Caco-2 (cell line): ENCODE measurements at regions of chr3 and their contacts with region 1.

Region 1: GRCh38 chr3:20511863-20512505 is 326.0 kb upstream of the SGO1 start:
- DNase-seq: peak; percentile 22 to 38
- H3K4me3 ChIP-seq: no peak overlapping the region
- H3K4me3 Mint-ChIP-seq: no peak overlapping the region
- H3K27ac Mint-ChIP-seq: no peak overlapping the region
- H3K4me1 ChIP-seq: no peaks in the 10 kb centered on the region
- H3K4me1 Mint-ChIP-seq: no peaks in the 10 kb centered on the region
- H3K27me3 ChIP-seq: no peaks in the 10 kb centered on the region
- H3K27me3 Mint-ChIP-seq: peaks cover 3% of the 10 kb centered on the region
- CTCF ChIP-seq: peak; percentile 45 to 65

Region 2: DNA sequence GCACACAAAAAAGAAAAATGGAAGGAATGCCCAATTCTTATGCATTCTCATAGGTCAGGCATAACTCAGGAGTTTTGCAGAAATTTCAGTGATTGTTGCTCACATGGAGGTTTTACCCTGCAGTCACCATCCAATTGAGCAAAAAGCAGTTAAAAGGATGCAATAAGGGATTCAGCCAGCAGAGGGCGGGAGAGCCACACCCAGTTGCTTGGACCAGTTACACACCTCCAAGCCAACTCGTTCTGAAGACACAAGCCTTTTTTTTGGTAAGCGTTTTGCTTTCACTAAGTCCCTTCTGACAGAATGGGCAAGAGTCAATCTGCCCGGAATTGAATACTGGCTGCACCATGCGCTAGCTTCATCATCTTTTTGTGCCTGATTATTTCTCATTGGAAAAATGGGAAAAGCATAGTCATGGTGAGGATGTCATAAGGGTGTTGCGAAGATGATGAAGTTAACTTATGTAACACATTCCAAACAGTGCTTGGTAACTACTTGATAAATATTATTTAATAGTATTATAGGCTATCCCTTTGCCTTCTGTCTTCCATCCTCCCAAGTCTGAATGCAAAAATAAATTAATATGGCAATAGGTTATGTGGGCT is 171.6 kb before region 1 on chr3:
- CTCF ChIA-PET with region 1: no interaction called
- POLR2A ChIA-PET with region 1: interaction called, 6 read pairs
- intact Hi-C with region 1: loop called (anchors 1 kb)
- DNase-seq: peak; percentile 63 to 79
- H3K4me3 ChIP-seq: no peak overlapping the region
- H3K4me3 Mint-ChIP-seq: no peak overlapping the region
- H3K27ac Mint-ChIP-seq: no peak overlapping the region
- H3K4me1 ChIP-seq: peaks cover 11% of the 10 kb centered on the region
- H3K4me1 Mint-ChIP-seq: no peaks in the 10 kb centered on the region
- H3K27me3 ChIP-seq: no peaks in the 10 kb centered on the region
- H3K27me3 Mint-ChIP-seq: no peaks in the 10 kb centered on the region
- CTCF ChIP-seq: peak; percentile 84 to 85

Region 3: DNA sequence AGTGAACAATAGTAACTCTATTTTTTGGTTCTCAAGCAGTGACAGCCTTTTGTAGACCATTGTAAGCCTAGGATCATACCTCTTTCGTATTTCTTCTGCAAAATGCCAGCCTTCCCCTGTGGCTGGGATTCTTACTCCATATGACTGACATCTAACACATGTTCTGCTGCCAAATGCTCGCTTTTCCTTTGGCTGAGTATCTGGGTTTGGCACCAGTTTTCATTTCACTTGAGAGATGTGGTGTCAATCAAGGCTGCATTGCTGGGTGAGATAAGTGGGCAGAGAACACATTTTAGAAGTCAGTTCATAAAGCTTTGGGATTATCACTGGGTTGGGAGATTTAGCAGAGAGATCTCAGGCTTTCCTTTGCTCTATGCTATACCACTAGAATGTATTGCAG is 188.7 kb after region 1 on chr3:
- CTCF ChIA-PET with region 1: no interaction called
- POLR2A ChIA-PET with region 1: no interaction called
- intact Hi-C with region 1: no loop called
- DNase-seq: no peak
- H3K4me3 ChIP-seq: no peak overlapping the region
- H3K4me3 Mint-ChIP-seq: no peak overlapping the region
- H3K27ac Mint-ChIP-seq: no peak overlapping the region
- H3K4me1 ChIP-seq: no peaks in the 10 kb centered on the region
- H3K4me1 Mint-ChIP-seq: no peaks in the 10 kb centered on the region
- H3K27me3 ChIP-seq: no peaks in the 10 kb centered on the region
- H3K27me3 Mint-ChIP-seq: no peaks in the 10 kb centered on the region
- CTCF ChIP-seq: no peak

Region 4: GRCh38 chr3:20729185-20729584 is 217.2 kb after region 1 on chr3:
- CTCF ChIA-PET with region 1: no interaction called
- POLR2A ChIA-PET with region 1: no interaction called
- intact Hi-C with region 1: no loop called
- DNase-seq: no peak
- H3K4me3 ChIP-seq: no peak overlapping the region
- H3K4me3 Mint-ChIP-seq: no peak overlapping the region
- H3K27ac Mint-ChIP-seq: no peak overlapping the region
- H3K4me1 ChIP-seq: no peaks in the 10 kb centered on the region
- H3K4me1 Mint-ChIP-seq: no peaks in the 10 kb centered on the region
- H3K27me3 ChIP-seq: no peaks in the 10 kb centered on the region
- H3K27me3 Mint-ChIP-seq: no peaks in the 10 kb centered on the region
- CTCF ChIP-seq: no peak

Region 5: DNA sequence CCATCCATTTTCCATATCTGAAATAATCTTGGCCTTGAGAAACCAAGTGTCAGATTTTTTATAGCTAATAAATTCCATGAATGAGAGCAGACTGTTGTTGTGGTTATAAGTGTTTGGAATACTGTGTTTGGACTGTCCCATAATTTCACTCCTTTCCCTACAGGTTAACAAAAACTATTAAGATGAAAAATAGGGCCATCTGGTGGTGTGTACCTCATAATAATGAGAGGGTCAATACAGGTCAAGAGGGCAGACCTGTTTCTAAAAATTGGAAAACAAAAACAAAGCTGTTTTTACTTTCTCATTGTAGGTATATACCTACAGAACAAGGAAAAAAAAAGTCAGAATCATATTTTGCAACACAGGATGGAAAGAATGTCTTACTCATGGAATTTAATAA is 227.8 kb after region 1 on chr3:
- CTCF ChIA-PET with region 1: no interaction called
- POLR2A ChIA-PET with region 1: no interaction called
- intact Hi-C with region 1: loop called (anchors 1 kb)
- DNase-seq: no peak
- H3K4me3 ChIP-seq: no peak overlapping the region
- H3K4me3 Mint-ChIP-seq: no peak overlapping the region
- H3K27ac Mint-ChIP-seq: no peak overlapping the region
- H3K4me1 ChIP-seq: no peaks in the 10 kb centered on the region
- H3K4me1 Mint-ChIP-seq: no peaks in the 10 kb centered on the region
- H3K27me3 ChIP-seq: no peaks in the 10 kb centered on the region
- H3K27me3 Mint-ChIP-seq: no peaks in the 10 kb centered on the region
- CTCF ChIP-seq: no peak

Region 6: DNA sequence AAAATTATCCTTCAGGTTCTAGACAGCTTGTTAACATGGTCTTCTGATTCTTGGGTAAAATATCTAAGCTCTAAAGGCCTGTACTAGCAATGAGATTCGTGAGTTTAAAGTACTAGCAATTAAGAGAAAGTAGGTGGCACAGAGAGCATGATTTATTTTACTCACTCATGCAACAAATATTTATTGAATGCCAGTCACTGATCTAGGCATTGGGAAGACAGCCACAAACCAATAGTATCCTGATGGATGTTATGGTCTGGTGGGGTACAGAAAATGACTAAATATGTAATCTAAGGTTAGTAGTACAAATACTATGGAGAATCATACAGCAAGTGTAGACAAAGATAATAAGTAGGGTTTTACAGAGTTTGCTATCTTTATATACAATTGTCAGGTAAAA is 487.7 kb after region 1 on chr3:
- CTCF ChIA-PET with region 1: no interaction called
- POLR2A ChIA-PET with region 1: no interaction called
- intact Hi-C with region 1: no loop called
- DNase-seq: no peak
- H3K4me3 ChIP-seq: no peak overlapping the region
- H3K4me3 Mint-ChIP-seq: no peak overlapping the region
- H3K27ac Mint-ChIP-seq: no peak overlapping the region
- H3K4me1 ChIP-seq: no peaks in the 10 kb centered on the region
- H3K4me1 Mint-ChIP-seq: no peaks in the 10 kb centered on the region
- H3K27me3 ChIP-seq: no peaks in the 10 kb centered on the region
- H3K27me3 Mint-ChIP-seq: peaks cover 7% of the 10 kb centered on the region
- CTCF ChIP-seq: no peak

Region 7: DNA sequence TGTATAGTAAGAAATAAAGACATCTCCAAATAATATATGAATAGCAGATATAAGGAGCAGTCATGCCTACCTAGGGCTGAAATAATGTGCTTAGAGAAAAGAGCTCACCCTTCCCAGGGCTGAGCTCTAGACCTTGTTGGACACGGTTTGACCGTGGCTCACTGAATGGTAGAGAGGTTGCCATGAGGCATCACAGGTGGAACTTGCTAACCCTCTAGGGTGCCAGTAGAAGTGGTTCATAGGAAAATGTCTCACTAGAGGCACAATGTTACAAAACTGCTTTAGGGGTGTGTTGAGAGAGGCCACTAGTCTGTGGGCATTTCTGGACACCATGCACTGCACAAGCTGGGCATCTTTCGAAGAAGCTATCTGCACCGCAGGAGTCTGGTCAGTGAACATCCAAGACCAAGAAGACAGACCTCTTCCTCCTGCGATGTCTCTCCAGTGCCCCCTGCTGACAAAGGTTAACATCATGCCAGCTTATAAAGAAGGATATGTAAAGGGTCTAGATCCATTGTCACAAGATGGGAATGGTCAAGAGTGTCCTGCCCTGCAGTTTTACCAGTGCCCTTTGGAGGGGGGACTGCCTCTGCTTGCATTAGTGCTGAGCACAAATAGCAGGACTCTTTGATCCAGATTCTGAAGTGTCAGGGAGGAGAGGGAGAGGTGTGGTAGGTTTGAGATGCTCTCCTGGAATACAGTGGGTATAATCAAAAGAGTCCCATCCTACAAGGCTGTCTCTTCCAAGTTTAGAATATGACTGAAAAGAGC is 972.3 kb after region 1 on chr3:
- CTCF ChIA-PET with region 1: no interaction called
- POLR2A ChIA-PET with region 1: no interaction called
- intact Hi-C with region 1: loop called (anchors 5 kb)
- DNase-seq: peak; percentile 43 to 57
- H3K4me3 ChIP-seq: no peak overlapping the region
- H3K4me3 Mint-ChIP-seq: no peak overlapping the region
- H3K27ac Mint-ChIP-seq: no peak overlapping the region
- H3K4me1 ChIP-seq: no peaks in the 10 kb centered on the region
- H3K4me1 Mint-ChIP-seq: no peaks in the 10 kb centered on the region
- H3K27me3 ChIP-seq: no peaks in the 10 kb centered on the region
- H3K27me3 Mint-ChIP-seq: no peaks in the 10 kb centered on the region
- CTCF ChIP-seq: peak; percentile 48 to 64

Region 8: GRCh38 chr3:22117751-22118346 is 1605.9 kb after region 1 on chr3:
- CTCF ChIA-PET with region 1: no interaction called
- POLR2A ChIA-PET with region 1: no interaction called
- intact Hi-C with region 1: loop called (anchors 5 kb)
- DNase-seq: no peak
- H3K4me3 ChIP-seq: no peak overlapping the region
- H3K4me3 Mint-ChIP-seq: no peak overlapping the region
- H3K27ac Mint-ChIP-seq: no peak overlapping the region
- H3K4me1 ChIP-seq: no peaks in the 10 kb centered on the region
- H3K4me1 Mint-ChIP-seq: no peaks in the 10 kb centered on the region
- H3K27me3 ChIP-seq: no peaks in the 10 kb centered on the region
- H3K27me3 Mint-ChIP-seq: peaks cover 5% of the 10 kb centered on the region
- CTCF ChIP-seq: peak; percentile 27 to 43